ENCODE measurements at regions of chr22 and their contacts with region 1.

Region 1: DNA sequence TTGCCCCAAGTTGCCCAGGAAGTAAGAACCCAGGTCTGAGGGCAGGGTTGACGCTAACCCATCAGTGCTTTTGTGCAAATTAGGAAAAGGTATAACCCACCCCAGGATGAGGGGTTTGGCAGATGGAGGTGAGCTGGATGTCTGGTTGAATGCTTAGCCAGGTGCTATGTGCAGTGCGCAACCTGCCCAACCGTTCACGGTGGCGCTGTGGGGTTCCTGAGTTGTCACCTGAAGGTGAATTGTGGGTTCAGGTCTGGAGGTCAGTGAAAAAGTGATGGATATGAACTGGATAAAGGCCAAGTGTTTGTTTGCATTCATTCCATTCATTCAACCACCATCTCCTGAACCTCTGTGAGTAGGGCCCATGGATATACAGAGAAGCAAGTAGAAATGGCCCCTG is 14.3 kb upstream of the LGALS2 start:
- DNase-seq: no peak
- H3K4me3 ChIP-seq: no peak overlapping the region
- H3K27ac ChIP-seq: no peak overlapping the region
- H3K4me1 ChIP-seq: no peaks in the 10 kb centered on the region
- H3K27me3 ChIP-seq: no peaks in the 10 kb centered on the region; the same call in 1 of the 2 replicates
- CTCF ChIP-seq: no peak
- EP300 ChIP-seq: no peak
- RAD21 ChIP-seq: no peak

Region 2: GRCh38 chr22:37521236-37521739 is 72.9 kb before region 1 on chr22:
- CTCF ChIA-PET with region 1: interaction called, 10 read pairs
- POLR2A ChIA-PET with region 1: no interaction called
- DNase-seq: no peak
- H3K4me3 ChIP-seq: no peak overlapping the region
- H3K27ac ChIP-seq: no peak overlapping the region
- H3K4me1 ChIP-seq: peaks cover 12 to 14% of the 10 kb centered on the region in 2 experiments; a peak in 3 of 4 replicates
- H3K27me3 ChIP-seq: no peaks in the 10 kb centered on the region
- CTCF ChIP-seq: no peak
- EP300 ChIP-seq: no peak
- RAD21 ChIP-seq: no peak

Region 3: GRCh38 chr22:37544955-37545699 is 49.1 kb before region 1 on chr22:
- CTCF ChIA-PET with region 1: interaction called, 60 read pairs
- POLR2A ChIA-PET with region 1: no interaction called
- DNase-seq: peak; percentile 56
- H3K4me3 ChIP-seq: no peak overlapping the region
- H3K27ac ChIP-seq: no peak overlapping the region
- H3K4me1 ChIP-seq: peaks cover 9 to 16% of the 10 kb centered on the region in 2 experiments; a peak in 2 of 4 replicates
- H3K27me3 ChIP-seq: no peaks in the 10 kb centered on the region
- CTCF ChIP-seq: peak; percentile 67
- EP300 ChIP-seq: no peak
- RAD21 ChIP-seq: peak; percentile 55

Region 4: DNA sequence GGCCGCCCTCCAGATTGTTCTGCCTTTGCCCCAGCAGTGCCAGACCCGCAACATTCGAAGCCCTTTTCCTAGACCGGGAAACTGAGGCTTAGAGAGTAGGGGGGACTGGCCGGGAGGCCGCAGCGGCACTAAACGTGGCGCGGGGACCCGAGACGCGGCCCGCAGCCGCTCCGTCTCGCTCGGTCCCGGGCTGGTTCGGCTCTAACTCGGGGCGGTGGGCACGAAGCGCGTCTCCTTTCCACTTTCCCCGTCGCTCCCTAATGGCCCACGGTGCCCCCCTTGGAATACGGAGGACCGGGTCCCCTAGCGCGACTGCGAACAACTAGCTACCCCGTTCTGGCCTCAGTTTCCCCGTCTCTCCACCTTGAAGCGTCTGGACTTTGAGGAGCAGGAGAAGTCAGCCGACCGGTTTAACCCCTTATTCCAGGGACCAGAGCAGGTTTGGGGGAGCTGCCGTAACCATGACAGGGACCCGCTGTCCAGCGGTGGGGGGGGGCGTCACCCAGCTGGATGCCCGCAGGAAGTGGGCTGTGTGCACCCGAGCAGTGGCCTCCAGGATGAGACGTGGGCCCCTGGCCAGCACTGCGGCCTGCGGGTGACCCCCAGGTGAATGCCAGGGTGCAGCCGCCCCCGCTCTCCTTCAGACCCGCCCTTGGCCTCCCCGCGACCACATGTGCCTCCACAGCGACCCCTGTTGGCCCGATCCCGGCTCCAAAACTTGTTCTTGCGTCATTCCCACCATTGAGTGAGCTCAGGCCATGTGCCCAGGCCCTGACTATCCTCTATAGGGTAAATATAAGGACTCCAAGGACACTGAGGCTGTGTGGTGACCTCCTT is 32.8 kb before region 1 on chr22:
- CTCF ChIA-PET with region 1: interaction called, 47 read pairs
- POLR2A ChIA-PET with region 1: no interaction called
- DNase-seq: peak; percentile 94
- H3K4me3 ChIP-seq: peak overlapping the region; percentile 56 to 75
- H3K27ac ChIP-seq: peak overlapping the region in 1 of 2 experiments; percentile 96; a peak in 2 of 4 replicates
- H3K4me1 ChIP-seq: peaks cover 10 to 28% of the 10 kb centered on the region in 2 experiments; a peak in 3 of 4 replicates
- H3K27me3 ChIP-seq: no peaks in the 10 kb centered on the region
- CTCF ChIP-seq: peak; percentile 89
- EP300 ChIP-seq: no peak
- RAD21 ChIP-seq: peak; percentile 27; the same call in 1 of the 2 replicates

Region 5: GRCh38 chr22:37581504-37581903 is 12.7 kb before region 1 on chr22:
- CTCF ChIA-PET with region 1: interaction called, 15 read pairs
- POLR2A ChIA-PET with region 1: no interaction called
- DNase-seq: no peak
- H3K4me3 ChIP-seq: no peak overlapping the region
- H3K27ac ChIP-seq: no peak overlapping the region
- H3K4me1 ChIP-seq: no peaks in the 10 kb centered on the region; a peak in 2 of 4 replicates
- H3K27me3 ChIP-seq: no peaks in the 10 kb centered on the region
- CTCF ChIP-seq: no peak
- EP300 ChIP-seq: no peak
- RAD21 ChIP-seq: no peak

Region 6: DNA sequence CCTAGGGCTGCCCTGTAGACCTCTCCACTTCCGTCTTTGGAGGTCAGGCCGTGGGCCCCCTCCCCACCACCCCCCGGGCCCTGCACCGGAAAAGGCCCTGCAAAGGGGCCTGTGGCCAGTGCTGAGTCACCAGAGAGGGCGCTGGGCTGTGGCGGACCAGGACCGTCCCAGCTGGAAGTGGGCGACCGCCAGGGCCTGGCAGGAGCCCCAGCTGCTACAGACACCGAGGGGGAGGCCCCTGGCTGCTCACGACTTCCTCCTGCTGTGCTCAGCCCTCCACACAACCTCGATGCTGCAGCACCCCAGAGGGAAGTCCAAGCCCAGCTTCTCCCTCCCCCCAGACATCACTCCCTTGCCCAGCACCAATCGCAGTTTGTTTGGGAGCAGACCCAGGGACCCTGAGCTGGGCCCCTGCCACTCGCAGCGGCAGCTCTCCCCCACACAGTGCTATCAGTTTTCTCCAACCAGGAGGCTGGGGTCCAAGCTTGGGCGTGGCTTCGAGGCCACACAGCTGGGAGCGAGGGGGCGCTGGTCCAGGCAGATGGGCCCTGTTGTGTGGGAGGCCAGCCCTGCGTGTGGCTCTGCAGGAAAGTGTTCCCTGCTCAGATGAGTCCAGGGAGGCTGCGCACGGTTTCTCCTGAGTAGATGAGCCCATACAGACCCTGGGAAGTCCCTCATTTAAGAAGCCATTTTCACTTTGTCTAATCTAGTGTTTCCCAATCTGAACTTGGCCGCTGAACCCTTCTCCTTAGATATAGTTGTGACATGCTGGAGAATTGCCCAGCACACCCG is 39.6 kb after region 1 on chr22:
- CTCF ChIA-PET with region 1: no interaction called
- POLR2A ChIA-PET with region 1: no interaction called
- DNase-seq: peak; percentile 91
- H3K4me3 ChIP-seq: peak overlapping the region; percentile 2 to 7; a peak in 2 of 4 replicates
- H3K27ac ChIP-seq: peak overlapping the region; percentile 69 to 98
- H3K4me1 ChIP-seq: peaks cover 23 to 51% of the 10 kb centered on the region in 2 experiments
- H3K27me3 ChIP-seq: no peaks in the 10 kb centered on the region
- CTCF ChIP-seq: peak; percentile 41
- EP300 ChIP-seq: peak in 1 of 2 experiments; percentile 25; a peak in 1 of 4 replicates
- RAD21 ChIP-seq: no peak; the same call in 1 of the 2 replicates